Activated CD4-positive, alpha-beta memory T cell treated with anti-CD3 and anti-CD28 coated beads for 36 hours (primary cell): ENCODE measurements at regions of chr20 and their contacts with region 1.

Region 1: GRCh38 chr20:3156811-3157619 is 2.6 kb downstream of the FASTKD5 start:
- DNase-seq: peak; percentile 31
- H3K4me3 Mint-ChIP-seq: peak overlapping the region; percentile 89
- H3K27ac Mint-ChIP-seq: peak overlapping the region; percentile 95
- H3K4me1 Mint-ChIP-seq: peaks cover 55% of the 10 kb centered on the region
- H3K27me3 Mint-ChIP-seq: no peaks in the 10 kb centered on the region

Region 2: DNA sequence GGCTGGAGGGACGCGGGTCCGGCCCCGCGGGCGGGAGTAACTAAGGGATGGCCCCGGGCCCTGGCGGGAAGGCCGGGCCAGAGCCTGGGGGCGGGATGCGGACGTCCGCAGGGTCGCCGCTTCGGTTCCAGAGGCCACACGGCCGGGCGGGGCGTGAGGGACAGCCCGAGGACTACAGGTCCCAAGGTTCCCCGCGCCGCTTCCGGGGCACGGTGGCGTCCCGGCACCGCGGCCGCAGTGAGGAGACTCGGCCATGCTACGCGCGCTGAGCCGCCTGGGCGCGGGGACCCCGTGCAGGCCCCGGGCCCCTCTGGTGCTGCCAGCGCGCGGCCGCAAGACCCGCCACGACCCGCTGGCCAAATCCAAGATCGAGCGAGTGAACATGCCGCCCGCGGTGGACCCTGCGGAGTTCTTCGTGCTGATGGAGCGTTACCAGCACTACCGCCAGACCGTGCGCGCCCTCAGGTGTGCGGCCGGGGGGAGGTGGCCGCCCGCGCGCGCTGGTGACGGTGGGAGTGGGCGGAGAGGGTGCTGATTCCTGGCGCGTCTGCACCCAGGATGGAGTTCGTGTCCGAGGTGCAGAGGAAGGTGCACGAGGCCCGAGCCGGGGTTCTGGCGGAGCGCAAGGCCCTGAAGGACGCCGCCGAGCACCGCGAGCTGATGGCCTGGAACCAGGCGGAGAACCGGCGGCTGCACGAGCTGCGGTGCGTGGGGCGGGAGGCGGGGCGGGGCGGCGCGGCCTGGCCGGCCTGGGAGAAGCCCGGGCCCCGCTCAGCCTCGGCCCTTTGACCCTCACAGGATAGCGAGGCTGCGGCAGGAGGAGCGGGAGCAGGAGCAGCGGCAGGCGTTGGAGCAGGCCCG is 111.0 kb before region 1 on chr20 and contains the start of gene MRPS26:
- CTCF ChIA-PET with region 1: no interaction called
- POLR2A ChIA-PET with region 1: no interaction called
- intact Hi-C with region 1: loop called (anchors 5 kb)
- DNase-seq: peak; percentile 89
- H3K4me3 Mint-ChIP-seq: peak within 1 kb of the TSS; percentile 97
- H3K27ac Mint-ChIP-seq: peak within 1 kb of the TSS; percentile 89
- H3K4me1 Mint-ChIP-seq: peaks cover 33% of the 10 kb centered on the region
- H3K27me3 Mint-ChIP-seq: no peaks in the 10 kb centered on the region
- total RNA-seq, gene MRPS26: 155 to 158 TPM

Region 3: GRCh38 chr20:3092611-3093379 is 64.2 kb before region 1 on chr20:
- CTCF ChIA-PET with region 1: no interaction called
- POLR2A ChIA-PET with region 1: no interaction called
- intact Hi-C with region 1: loop called (anchors 10 kb)
- DNase-seq: peak; percentile 54
- H3K4me3 Mint-ChIP-seq: peak overlapping the region; percentile 74
- H3K27ac Mint-ChIP-seq: peak overlapping the region; percentile 62
- H3K4me1 Mint-ChIP-seq: peaks cover 14% of the 10 kb centered on the region
- H3K27me3 Mint-ChIP-seq: peaks cover 10% of the 10 kb centered on the region

Region 4: DNA sequence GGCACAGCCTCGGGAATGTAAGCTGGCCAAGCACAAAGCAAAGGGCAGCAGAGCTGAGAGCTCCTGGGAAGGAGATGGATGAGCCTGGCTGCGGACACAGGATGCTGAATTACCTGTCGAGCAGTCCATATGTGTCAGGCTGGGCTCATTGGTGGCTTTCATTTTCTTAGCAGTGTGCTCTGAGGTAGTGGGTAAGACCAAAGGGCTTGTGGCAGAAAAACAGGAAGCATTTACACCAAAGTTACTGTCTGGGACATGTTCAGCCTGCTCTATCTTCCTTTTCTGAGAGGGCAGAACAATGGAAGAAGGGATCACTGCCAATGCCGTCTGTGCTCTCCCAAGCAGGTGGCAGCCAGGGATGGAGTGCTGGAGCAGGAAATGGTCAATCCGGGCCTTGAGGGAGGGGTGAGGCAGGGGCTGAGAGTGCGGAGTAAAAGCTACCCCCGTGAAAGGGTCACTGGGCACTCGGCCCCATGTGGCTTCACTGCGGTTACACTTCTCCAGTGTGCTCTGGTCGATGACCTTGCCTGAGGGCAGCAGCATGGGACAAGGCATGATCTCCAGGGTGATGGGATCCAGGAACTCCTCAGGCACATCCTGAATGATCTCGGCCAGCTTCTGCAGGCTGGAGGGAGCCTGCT is 35.6 kb before region 1 on chr20:
- CTCF ChIA-PET with region 1: interaction called, 3 read pairs
- POLR2A ChIA-PET with region 1: no interaction called
- intact Hi-C with region 1: loop called (anchors 2 kb)
- DNase-seq: no peak
- H3K4me3 Mint-ChIP-seq: no peak overlapping the region
- H3K27ac Mint-ChIP-seq: peak overlapping the region; percentile 61
- H3K4me1 Mint-ChIP-seq: peaks cover 33% of the 10 kb centered on the region
- H3K27me3 Mint-ChIP-seq: no peaks in the 10 kb centered on the region

Region 5: GRCh38 chr20:3173610-3174441 is 16.8 kb after region 1 on chr20:
- CTCF ChIA-PET with region 1: interaction called, 4 read pairs
- POLR2A ChIA-PET with region 1: interaction called, 6 read pairs
- intact Hi-C with region 1: loop called (anchors 1 kb)
- DNase-seq: peak; percentile 92
- H3K4me3 Mint-ChIP-seq: peak overlapping the region; percentile 84
- H3K27ac Mint-ChIP-seq: no peak overlapping the region
- H3K4me1 Mint-ChIP-seq: peaks cover 6% of the 10 kb centered on the region
- H3K27me3 Mint-ChIP-seq: peaks cover 17% of the 10 kb centered on the region

Region 6: GRCh38 chr20:3204124-3204822 is 47.3 kb after region 1 on chr20 and contains the start of gene DDRGK1:
- CTCF ChIA-PET with region 1: interaction called, 3 read pairs
- POLR2A ChIA-PET with region 1: interaction called, 9 read pairs
- intact Hi-C with region 1: loop called (anchors 1 kb)
- DNase-seq: peak; percentile 96
- H3K4me3 Mint-ChIP-seq: peak within 1 kb of the TSS; percentile 97
- H3K27ac Mint-ChIP-seq: peak within 1 kb of the TSS; percentile 97
- H3K4me1 Mint-ChIP-seq: peaks cover 20% of the 10 kb centered on the region
- H3K27me3 Mint-ChIP-seq: no peaks in the 10 kb centered on the region
- total RNA-seq, gene DDRGK1: 72.1 to 76.8 TPM

Region 7: DNA sequence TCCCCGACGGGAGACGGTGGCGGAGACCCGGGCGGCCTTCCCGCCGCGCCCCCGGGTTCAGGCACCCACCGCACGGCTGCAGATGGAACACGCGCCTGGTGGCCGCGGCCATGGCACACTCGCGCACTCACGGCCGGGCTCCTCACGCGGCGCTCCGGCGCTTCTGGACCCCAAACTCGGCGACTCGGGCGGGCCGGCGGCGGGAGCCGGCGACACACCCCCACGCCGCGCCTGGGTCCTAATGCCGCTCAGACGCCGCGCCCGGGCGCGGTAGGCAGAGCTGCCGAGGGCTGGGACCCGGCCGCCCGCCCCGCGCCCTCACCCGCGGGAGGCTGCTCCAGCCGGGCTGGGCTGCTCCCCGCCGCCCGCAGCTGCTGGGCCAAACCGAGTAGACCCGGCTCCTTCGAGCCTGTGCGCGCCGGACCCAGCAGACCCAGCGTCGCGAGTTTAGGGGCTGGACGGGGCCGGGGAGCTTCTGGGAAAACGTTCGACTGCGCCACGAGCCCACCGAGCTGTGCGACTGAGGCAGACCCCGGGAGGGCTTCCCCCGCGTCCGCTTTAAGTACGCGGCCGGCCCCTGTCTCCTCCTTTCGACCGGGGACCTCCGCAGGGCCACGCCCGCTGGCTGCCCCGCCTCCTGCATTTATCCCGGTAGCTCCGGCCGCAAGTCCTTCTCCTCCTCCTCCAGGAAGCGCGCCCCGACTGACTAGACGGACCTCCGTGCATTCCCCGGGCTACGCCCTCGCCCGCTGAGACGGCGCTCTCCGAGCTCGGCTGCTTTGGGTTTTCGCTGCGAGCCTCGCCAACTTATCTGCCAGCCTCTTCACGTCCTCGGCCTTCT is 82.2 kb after region 1 on chr20 and contains the start of gene SLC4A11:
- CTCF ChIA-PET with region 1: no interaction called
- POLR2A ChIA-PET with region 1: no interaction called
- intact Hi-C with region 1: no loop called
- DNase-seq: peak; percentile 44
- H3K4me3 Mint-ChIP-seq: peak within 1 kb of the TSS; percentile 75
- H3K27ac Mint-ChIP-seq: no peak within 1 kb of the TSS
- H3K4me1 Mint-ChIP-seq: peaks cover 6% of the 10 kb centered on the region
- H3K27me3 Mint-ChIP-seq: peaks cover 43% of the 10 kb centered on the region
- total RNA-seq, gene SLC4A11: 0.87 to 1.1 TPM

Region 8: GRCh38 chr20:3420211-3420707 is 263.2 kb after region 1 on chr20:
- CTCF ChIA-PET with region 1: no interaction called
- POLR2A ChIA-PET with region 1: no interaction called
- intact Hi-C with region 1: loop called (anchors 5 kb)
- DNase-seq: peak; percentile 83
- H3K4me3 Mint-ChIP-seq: no peak overlapping the region
- H3K27ac Mint-ChIP-seq: peak overlapping the region; percentile 75
- H3K4me1 Mint-ChIP-seq: peaks cover 9% of the 10 kb centered on the region
- H3K27me3 Mint-ChIP-seq: no peaks in the 10 kb centered on the region